IMR-90 (cell line): ENCODE measurements at regions of chr12 and their contacts with region 1.

Region 1: GRCh38 chr12:31456562-31456961 is 130.6 kb upstream of the SINHCAF start:
- DNase-seq: no peak
- ATAC-seq: no peak; the same call in 1 of the 2 replicates
- H3K4me3 ChIP-seq: no peak overlapping the region
- H3K27ac ChIP-seq: no peak overlapping the region
- H3K4me1 ChIP-seq: no peaks in the 10 kb centered on the region
- H3K27me3 ChIP-seq: no peaks in the 10 kb centered on the region
- CTCF ChIP-seq: no peak
- POLR2A ChIP-seq: no peak
- RAD21 ChIP-seq: no peak

Region 2: DNA sequence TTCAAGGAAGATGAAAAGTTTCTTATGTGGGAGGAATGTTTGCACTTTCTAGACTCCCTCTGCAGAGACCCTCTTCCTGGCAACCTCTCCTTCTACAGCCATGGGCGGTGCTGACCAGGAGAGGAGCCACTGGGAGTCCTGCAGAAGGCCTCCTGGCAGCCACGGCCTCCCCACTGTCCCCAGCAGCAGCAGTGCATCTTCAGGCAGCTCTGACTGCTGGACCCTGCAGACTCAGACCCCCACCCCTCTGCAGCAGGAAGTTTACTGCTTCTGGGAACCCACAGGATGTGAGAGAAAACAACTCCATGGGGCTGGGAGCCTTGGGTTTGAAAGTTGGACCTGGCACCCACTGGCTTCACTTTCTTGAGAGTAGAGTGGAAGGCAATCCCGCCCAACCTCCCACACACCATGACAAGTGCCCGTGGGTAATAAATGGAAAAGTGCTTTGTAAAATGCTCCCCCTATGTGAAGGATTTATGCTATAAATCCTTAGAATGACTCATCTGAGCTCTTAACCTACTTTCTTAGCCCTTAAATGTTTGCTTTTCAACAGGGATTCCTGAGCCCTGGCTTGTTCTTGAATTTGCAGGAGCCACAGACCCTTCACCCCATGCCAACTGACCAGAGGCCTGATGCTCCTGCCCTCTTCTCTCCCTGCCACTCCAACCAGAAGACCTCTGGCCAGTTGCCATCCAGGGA is 420.4 kb before region 1 on chr12:
- CTCF ChIA-PET with region 1: no interaction called
- POLR2A ChIA-PET with region 1: no interaction called
- dilution Hi-C with region 1: no loop called
- in situ Hi-C with region 1: no loop called
- intact Hi-C with region 1: no loop called
- DNase-seq: peak; percentile 18
- ATAC-seq: peak; percentile 73
- H3K4me3 ChIP-seq: no peak overlapping the region
- H3K27ac ChIP-seq: no peak overlapping the region
- H3K4me1 ChIP-seq: peaks cover 3% of the 10 kb centered on the region; the same call in 1 of the 2 replicates
- H3K27me3 ChIP-seq: peaks cover 10% of the 10 kb centered on the region
- CTCF ChIP-seq: no peak
- POLR2A ChIP-seq: no peak
- RAD21 ChIP-seq: no peak

Region 3: GRCh38 chr12:31491819-31492598 is 35.4 kb after region 1 on chr12:
- CTCF ChIA-PET with region 1: no interaction called
- POLR2A ChIA-PET with region 1: no interaction called
- dilution Hi-C with region 1: no loop called
- in situ Hi-C with region 1: loop called (anchors 5 kb)
- intact Hi-C with region 1: no loop called
- DNase-seq: peak; percentile 85
- ATAC-seq: peak; percentile 67
- H3K4me3 ChIP-seq: no peak overlapping the region
- H3K27ac ChIP-seq: no peak overlapping the region
- H3K4me1 ChIP-seq: peaks cover 9% of the 10 kb centered on the region
- H3K27me3 ChIP-seq: no peaks in the 10 kb centered on the region
- CTCF ChIP-seq: no peak
- POLR2A ChIP-seq: no peak
- RAD21 ChIP-seq: no peak

Region 4: DNA sequence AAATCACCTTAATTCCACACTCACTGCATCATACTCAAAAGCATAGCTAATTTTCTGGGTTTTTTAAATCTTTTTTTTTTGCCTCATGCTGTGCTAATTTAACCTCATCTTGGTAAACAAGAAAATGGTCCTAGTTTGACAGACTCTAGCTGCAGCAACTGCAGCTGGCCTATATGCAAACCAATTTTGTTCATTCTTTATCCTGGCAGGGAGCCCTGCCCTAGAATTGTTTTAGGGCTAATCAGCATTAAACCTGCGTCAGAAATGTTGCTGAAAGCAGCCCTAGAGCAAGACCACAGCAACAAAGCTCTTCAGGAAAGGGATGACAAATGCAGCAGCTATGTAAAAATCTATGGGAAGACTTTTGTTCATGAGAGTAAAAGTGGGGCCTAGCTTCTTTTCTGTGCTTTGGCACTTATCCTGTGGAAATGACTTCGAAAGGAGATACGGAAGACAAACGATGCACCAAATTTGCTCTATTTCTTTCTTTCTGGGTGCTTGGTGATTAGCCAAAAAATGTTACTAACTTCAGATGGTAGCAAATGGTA is 62.2 kb after region 1 on chr12:
- CTCF ChIA-PET with region 1: no interaction called
- POLR2A ChIA-PET with region 1: no interaction called
- dilution Hi-C with region 1: no loop called
- in situ Hi-C with region 1: loop called (anchors 10 kb)
- intact Hi-C with region 1: no loop called
- DNase-seq: peak; percentile 100
- ATAC-seq: peak; percentile 88
- H3K4me3 ChIP-seq: no peak overlapping the region
- H3K27ac ChIP-seq: peak overlapping the region; percentile 94; the same call in 1 of the 2 replicates
- H3K4me1 ChIP-seq: peaks cover 23% of the 10 kb centered on the region
- H3K27me3 ChIP-seq: no peaks in the 10 kb centered on the region
- CTCF ChIP-seq: no peak
- POLR2A ChIP-seq: peak; percentile 70
- RAD21 ChIP-seq: no peak; the same call in none of the 2 replicates

Region 5: DNA sequence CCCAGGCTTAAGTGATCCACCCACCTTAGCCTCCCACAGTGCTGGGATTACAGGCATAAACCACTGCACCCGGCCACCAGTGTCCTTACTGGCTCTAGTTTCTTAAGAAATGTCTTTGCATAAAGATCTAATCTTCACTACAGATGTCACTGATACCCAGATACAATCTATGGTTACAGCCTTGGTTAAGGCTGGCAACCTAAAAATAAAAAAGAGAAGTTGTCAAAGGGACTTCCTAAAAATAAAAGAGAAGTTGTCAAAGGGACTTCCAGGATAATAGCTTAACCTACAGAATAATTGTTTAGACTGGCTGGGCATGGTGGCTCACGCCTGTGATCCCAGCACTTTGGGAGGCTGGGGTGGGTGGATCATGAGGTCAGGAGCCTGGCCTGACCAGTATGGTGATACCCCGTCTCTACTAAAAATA is 230.6 kb after region 1 on chr12:
- CTCF ChIA-PET with region 1: no interaction called
- POLR2A ChIA-PET with region 1: no interaction called
- dilution Hi-C with region 1: no loop called
- in situ Hi-C with region 1: no loop called
- intact Hi-C with region 1: no loop called
- DNase-seq: no peak
- ATAC-seq: no peak
- H3K4me3 ChIP-seq: no peak overlapping the region
- H3K27ac ChIP-seq: no peak overlapping the region
- H3K4me1 ChIP-seq: no peaks in the 10 kb centered on the region
- H3K27me3 ChIP-seq: no peaks in the 10 kb centered on the region
- CTCF ChIP-seq: no peak
- POLR2A ChIP-seq: no peak
- RAD21 ChIP-seq: no peak